Endothelial cell of umbilical vein (primary cell): ENCODE measurements at regions of chr5 and their contacts with region 1.

Region 1: GRCh38 chr5:72366324-72366976 is 46.3 kb downstream of the PTCD2 start:
- DNase-seq: peak; percentile 87
- H3K4me3 ChIP-seq: no peak overlapping the region
- H3K27ac ChIP-seq: peak overlapping the region; percentile 23
- H3K4me1 ChIP-seq: peaks cover 23% of the 10 kb centered on the region
- H3K27me3 ChIP-seq: no peaks in the 10 kb centered on the region
- CTCF ChIP-seq: peak; percentile 66 to 76
- POLR2A ChIP-seq: no peak

Region 2: GRCh38 chr5:72355706-72356299 is 10.6 kb before region 1 on chr5:
- CTCF ChIA-PET with region 1: interaction called, 33 read pairs
- POLR2A ChIA-PET with region 1: no interaction called
- dilution Hi-C with region 1: no loop called
- intact Hi-C with region 1: no loop called
- DNase-seq: peak; percentile 69
- H3K4me3 ChIP-seq: no peak overlapping the region
- H3K27ac ChIP-seq: no peak overlapping the region
- H3K4me1 ChIP-seq: peaks cover 7% of the 10 kb centered on the region
- H3K27me3 ChIP-seq: no peaks in the 10 kb centered on the region
- CTCF ChIP-seq: peak; percentile 54 to 57
- POLR2A ChIP-seq: no peak

Region 3: GRCh38 chr5:72394688-72395087 is 28.2 kb after region 1 on chr5:
- CTCF ChIA-PET with region 1: interaction called, 13 read pairs
- POLR2A ChIA-PET with region 1: no interaction called
- dilution Hi-C with region 1: no loop called
- intact Hi-C with region 1: no loop called
- DNase-seq: peak; percentile 46
- H3K4me3 ChIP-seq: no peak overlapping the region
- H3K27ac ChIP-seq: no peak overlapping the region
- H3K4me1 ChIP-seq: peaks cover 19% of the 10 kb centered on the region
- H3K27me3 ChIP-seq: no peaks in the 10 kb centered on the region
- CTCF ChIP-seq: peak; percentile 50 to 56
- POLR2A ChIP-seq: no peak

Region 4: GRCh38 chr5:72465601-72466563 is 99.4 kb after region 1 on chr5:
- CTCF ChIA-PET with region 1: interaction called, 13 read pairs
- POLR2A ChIA-PET with region 1: no interaction called
- dilution Hi-C with region 1: no loop called
- intact Hi-C with region 1: no loop called
- DNase-seq: peak; percentile 23
- H3K4me3 ChIP-seq: no peak overlapping the region
- H3K27ac ChIP-seq: no peak overlapping the region
- H3K4me1 ChIP-seq: peaks cover 36% of the 10 kb centered on the region
- H3K27me3 ChIP-seq: no peaks in the 10 kb centered on the region
- CTCF ChIP-seq: no peak
- POLR2A ChIP-seq: no peak

Region 5: DNA sequence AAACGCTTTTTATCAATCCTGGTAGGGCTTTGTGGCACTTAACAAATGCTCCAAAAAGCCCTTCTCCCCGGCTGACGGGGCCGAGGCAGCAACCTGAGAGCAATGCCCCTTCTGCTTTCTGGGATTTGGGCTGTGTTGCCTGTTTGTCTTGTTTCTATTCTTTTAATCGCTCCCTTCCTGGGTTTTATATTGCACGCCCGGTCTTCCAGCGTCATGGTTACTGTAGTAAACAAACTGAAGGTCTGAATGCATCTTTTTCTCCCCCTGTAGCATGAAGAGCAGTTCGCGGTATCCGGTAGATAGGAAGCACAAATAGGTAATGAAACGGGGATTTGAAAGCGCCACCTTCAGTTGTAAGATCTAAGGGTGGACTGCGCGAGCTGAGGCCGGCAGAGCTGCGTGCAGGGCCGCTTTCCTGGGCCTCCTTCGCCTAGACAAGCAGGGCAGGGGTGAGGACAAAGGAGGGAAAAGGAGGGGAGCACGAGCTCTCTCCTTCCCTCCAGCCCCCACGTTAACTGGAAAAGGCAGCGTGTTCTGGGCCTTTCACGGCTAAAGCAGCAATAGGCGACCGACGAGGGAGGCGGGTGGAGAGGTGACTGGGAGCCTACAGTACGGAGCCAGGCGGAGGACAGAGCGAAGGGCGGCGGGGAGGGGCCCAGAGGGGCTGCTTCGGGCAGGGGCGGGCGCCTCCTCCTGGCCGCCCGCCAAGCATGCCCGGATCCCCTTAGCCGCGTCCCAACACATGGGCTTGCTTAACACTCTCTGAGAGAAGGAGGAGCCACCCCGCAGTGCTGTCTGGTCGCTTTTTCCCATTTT is 190.1 kb after region 1 on chr5:
- CTCF ChIA-PET with region 1: interaction called, 15 read pairs
- POLR2A ChIA-PET with region 1: interaction called, 10 read pairs
- dilution Hi-C with region 1: no loop called
- intact Hi-C with region 1: no loop called
- DNase-seq: peak; percentile 85
- H3K4me3 ChIP-seq: peak overlapping the region in 1 of 3 experiments; percentile 4
- H3K27ac ChIP-seq: peak overlapping the region; percentile 97
- H3K4me1 ChIP-seq: peaks cover 83% of the 10 kb centered on the region
- H3K27me3 ChIP-seq: no peaks in the 10 kb centered on the region
- CTCF ChIP-seq: no peak
- POLR2A ChIP-seq: peak; percentile 92

Region 6: DNA sequence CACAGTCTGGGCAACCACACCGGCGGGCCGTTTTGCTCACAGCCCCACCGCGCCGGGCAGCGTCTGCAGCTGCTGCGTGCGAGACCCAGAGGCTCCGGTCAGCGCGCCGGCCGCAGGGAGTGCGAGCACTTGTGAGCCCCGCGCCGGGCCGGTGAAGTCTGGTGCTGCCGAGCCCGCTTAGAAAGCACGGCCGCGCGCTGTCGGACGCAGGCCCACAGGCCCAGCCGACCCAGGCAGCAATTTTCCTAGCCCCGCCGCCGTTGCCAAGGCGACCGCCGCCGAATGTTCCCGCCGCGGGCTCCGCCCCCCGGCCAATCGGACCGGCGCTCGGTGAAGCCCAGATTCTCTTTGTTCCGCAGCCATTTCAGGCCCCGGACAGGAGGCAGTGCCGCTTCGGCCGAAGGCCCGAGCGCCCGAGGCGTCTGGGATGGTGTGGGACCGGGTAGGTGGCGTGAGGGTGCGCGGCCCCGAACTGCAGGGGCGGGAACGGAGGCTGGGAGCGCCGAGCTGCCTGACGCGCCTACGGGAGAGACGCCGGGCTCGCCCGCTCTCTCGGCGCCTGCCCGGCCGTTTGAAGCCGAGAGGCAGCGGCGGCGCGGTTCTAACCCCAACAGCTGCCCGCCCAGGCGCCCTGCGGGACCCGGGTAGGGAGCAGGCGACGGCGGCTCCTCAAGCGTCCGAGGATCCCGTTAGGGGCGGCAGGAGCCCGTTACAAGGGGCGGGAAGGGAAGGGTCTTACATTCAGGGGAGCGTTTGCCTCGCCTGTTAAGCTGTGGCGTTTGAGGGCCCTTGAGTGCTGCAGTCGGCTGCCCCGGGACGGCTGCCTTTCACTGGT is 450.1 kb after region 1 on chr5 and contains the start of gene TNPO1:
- CTCF ChIA-PET with region 1: interaction called, 50 read pairs
- POLR2A ChIA-PET with region 1: no interaction called
- dilution Hi-C with region 1: no loop called
- intact Hi-C with region 1: loop called (anchors 1 kb)
- DNase-seq: peak; percentile 96
- H3K4me3 ChIP-seq: peak within 1 kb of the TSS; percentile 92 to 100 (median 100)
- H3K27ac ChIP-seq: peak within 1 kb of the TSS; percentile 98
- H3K4me1 ChIP-seq: peaks cover 43% of the 10 kb centered on the region
- H3K27me3 ChIP-seq: no peaks in the 10 kb centered on the region
- CTCF ChIP-seq: no peak
- POLR2A ChIP-seq: peak; percentile 99
- total RNA-seq, gene TNPO1: 242 and 298 TPM in 2 replicates